ENCODE measurements at regions of chr14 and their contacts with region 1.

Region 1: DNA sequence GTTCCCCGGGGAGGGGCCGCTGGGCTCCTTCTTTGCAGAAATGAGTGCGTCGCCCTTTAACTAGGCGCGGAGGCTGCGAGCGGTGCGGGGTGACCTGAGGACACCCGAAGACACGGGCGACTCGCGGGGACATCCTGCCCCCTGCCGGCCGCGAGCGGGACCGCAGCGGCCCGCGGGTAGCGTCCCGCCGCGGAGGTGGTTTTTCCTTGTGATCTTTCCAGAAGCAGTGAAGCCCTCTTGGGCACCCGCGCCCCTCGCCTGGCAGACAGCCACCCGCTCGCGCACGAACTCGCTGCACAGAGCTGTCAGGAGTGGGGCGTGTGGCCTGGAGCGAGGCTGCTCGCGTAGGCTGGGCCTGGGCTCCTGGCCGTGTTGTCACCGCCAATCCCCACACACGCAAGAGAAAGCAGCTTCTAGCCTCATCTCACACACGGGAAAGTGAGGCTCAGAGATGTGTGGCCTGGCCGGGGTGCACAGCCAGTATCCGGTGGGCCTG is 67.2 kb downstream of the DIO3 start:
- DNase-seq: peak; percentile 58
- H3K4me3 Mint-ChIP-seq: no peak overlapping the region
- H3K27ac Mint-ChIP-seq: no peak overlapping the region
- H3K4me1 Mint-ChIP-seq: no peaks in the 10 kb centered on the region
- H3K27me3 Mint-ChIP-seq: peaks cover 2% of the 10 kb centered on the region

Region 2: DNA sequence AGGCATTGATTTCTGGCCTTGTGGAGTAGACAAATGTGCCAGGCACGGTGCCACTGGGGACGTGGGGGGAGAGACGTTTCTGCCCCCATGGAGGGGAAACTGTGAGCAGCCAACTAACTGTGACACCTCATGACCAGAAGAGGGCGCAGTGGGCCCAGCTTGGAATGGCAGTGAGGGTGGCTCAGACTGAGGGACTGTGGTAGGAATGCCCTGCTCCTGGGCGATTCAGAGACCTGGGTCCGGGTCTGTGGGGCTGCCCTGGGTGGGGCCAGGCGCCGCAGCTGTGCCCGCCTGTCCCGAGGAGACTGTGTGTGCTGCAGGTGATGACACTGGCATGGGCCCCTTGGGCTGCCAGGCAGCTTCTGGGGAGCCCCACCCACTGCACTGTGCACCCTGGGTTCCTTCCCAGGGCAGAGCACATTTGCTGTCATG is 1244.8 kb before region 1 on chr14:
- intact Hi-C with region 1: loop called (anchors 10 kb)
- DNase-seq: peak; percentile 53
- H3K4me3 Mint-ChIP-seq: no peak overlapping the region
- H3K27ac Mint-ChIP-seq: no peak overlapping the region
- H3K4me1 Mint-ChIP-seq: peaks cover 7% of the 10 kb centered on the region
- H3K27me3 Mint-ChIP-seq: no peaks in the 10 kb centered on the region

Region 3: GRCh38 chr14:101520621-101521472 is 107.7 kb before region 1 on chr14:
- intact Hi-C with region 1: no loop called
- DNase-seq: no peak
- H3K4me3 Mint-ChIP-seq: no peak overlapping the region
- H3K27ac Mint-ChIP-seq: no peak overlapping the region
- H3K4me1 Mint-ChIP-seq: no peaks in the 10 kb centered on the region
- H3K27me3 Mint-ChIP-seq: no peaks in the 10 kb centered on the region

Region 4: DNA sequence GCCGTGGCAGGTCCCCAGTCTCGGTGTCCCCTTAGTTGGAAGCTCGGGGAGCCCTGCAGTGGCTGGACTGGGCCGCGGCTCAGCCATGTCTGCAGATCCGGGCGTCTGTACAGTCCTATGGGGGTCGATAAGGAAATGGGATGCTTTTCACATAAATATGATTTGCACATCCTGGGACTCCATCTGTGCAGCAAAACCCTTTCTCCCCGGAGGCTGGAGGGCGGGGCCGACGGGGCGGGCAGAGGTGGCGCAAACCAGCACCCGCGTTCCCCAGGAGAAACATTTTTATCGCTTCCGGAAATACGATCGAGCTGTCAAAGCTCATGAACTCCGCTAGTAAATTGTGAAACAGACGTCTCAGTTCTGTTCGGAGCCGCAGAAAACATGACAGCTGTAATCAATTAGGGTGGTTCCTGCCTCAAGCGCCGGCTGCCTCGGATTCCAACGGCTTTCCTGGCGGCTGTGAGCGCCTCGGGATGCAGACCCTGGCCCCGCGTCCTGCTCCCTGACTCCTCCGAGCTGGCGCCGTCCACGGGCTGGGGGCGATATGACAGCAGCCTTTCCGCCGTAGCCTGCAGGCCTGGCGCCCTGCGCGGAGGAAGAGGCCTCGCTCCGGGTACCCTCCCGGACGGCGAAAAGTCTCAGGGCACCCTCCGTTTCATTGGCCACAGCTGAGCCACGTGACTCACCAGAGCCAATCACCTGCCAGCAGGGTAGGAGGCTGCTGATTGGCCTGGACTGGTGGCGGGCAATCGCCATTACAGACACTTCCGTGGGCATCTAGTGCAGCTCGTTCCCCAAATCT is 44.3 kb before region 1 on chr14:
- intact Hi-C with region 1: no loop called
- DNase-seq: no peak
- H3K4me3 Mint-ChIP-seq: no peak overlapping the region
- H3K27ac Mint-ChIP-seq: no peak overlapping the region
- H3K4me1 Mint-ChIP-seq: no peaks in the 10 kb centered on the region
- H3K27me3 Mint-ChIP-seq: no peaks in the 10 kb centered on the region

Measured in activated T-helper 2 cell treated with anti-CD3 and anti-CD28 coated beads, Interferon-gamma antibody, Interleukin-2, Interleukin-4, amounts not matched to agents 10 μg/mL and 5 μg/mL and 100 μg/mL, durations not matched to agents 14 hours and 24 hours and 36 hours (primary cell).